CD4-positive, alpha-beta memory T cell (primary cell): ENCODE measurements at regions of chrX and their contacts with region 1.

Region 1: GRCh38 chrX:39749720-39750119 is 348.0 kb downstream of the BCOR start:
- DNase-seq: no peak
- H3K4me3 ChIP-seq: no peak overlapping the region
- H3K4me3 Mint-ChIP-seq: no peak overlapping the region
- H3K27ac ChIP-seq: no peak overlapping the region
- H3K27ac Mint-ChIP-seq: no peak overlapping the region
- H3K4me1 ChIP-seq: no peaks in the 10 kb centered on the region
- H3K4me1 Mint-ChIP-seq: peaks cover 0 to 2% (median 0%) of the 10 kb centered on the region in 4 donors
- H3K27me3 ChIP-seq: no peaks in the 10 kb centered on the region
- H3K27me3 Mint-ChIP-seq: no peaks in the 10 kb centered on the region

Region 2: DNA sequence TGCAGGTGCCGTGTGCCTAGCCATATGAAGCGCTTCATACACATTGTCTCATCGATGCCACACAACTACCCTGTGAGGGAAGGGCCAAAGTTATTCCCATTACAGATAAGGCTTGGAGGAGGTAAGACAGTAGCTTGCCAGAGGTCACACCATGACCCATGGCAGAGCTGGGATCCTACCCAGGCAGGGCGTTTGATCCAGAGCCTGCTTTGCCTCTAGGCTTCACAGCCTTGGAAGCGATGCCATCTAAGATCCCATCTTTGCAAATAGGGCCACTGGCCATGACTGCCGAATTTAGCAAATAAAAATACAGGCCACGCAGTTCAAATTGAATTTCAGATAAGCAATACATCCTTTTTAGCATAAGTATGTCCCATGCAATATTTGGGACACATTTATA is 10.1 kb before region 1 on chrX:
- CTCF ChIA-PET with region 1: no interaction called
- POLR2A ChIA-PET with region 1: no interaction called
- intact Hi-C with region 1: no loop called
- DNase-seq: no peak
- H3K4me3 ChIP-seq: no peak overlapping the region
- H3K4me3 Mint-ChIP-seq: no peak overlapping the region
- H3K27ac ChIP-seq: no peak overlapping the region
- H3K27ac Mint-ChIP-seq: no peak overlapping the region
- H3K4me1 ChIP-seq: no peaks in the 10 kb centered on the region
- H3K4me1 Mint-ChIP-seq: no peaks in the 10 kb centered on the region
- H3K27me3 ChIP-seq: no peaks in the 10 kb centered on the region
- H3K27me3 Mint-ChIP-seq: no peaks in the 10 kb centered on the region

Region 3: GRCh38 chrX:39796856-39797255 is 47.1 kb after region 1 on chrX:
- CTCF ChIA-PET with region 1: no interaction called
- POLR2A ChIA-PET with region 1: no interaction called
- intact Hi-C with region 1: loop called (anchors 10 kb)
- DNase-seq: no peak
- H3K4me3 ChIP-seq: no peak overlapping the region
- H3K4me3 Mint-ChIP-seq: no peak overlapping the region
- H3K27ac ChIP-seq: no peak overlapping the region
- H3K27ac Mint-ChIP-seq: no peak overlapping the region
- H3K4me1 ChIP-seq: no peaks in the 10 kb centered on the region
- H3K4me1 Mint-ChIP-seq: no peaks in the 10 kb centered on the region
- H3K27me3 ChIP-seq: no peaks in the 10 kb centered on the region
- H3K27me3 Mint-ChIP-seq: no peaks in the 10 kb centered on the region

Region 4: DNA sequence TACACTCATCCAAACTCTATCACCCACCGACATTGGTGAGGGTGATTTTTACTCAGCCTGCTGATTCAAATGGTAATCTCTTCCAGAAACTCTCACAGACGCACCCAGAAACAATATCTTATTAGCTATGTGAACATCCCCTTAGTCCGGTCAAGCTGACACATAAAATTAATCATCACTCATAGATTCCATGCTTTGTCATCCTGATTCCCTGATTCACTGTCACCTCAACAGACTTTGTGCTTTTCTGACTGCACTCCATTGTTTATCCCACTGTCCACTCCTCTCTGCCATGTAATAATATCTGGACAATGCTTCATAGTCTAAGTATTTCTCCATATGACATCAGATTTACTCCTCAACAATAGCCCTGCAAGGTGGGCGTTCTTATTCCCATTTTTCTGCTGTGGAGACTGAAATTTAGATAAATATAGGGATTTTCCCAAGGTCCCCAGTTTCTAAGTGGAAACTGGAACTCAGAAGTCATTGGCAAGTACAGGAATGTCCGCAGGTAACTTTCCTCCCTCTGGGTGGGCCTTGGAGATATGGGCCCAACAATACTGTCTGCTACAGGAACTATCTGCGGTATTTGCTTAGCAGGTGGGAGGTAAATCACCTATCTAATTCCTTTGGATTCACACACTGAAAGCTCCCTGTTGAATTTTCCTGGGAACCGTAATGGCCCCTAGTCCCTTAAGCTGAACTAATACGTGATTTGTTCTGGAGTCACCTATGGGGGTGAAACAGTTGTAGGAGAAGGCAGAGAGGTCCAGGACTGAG is 576.7 kb after region 1 on chrX:
- CTCF ChIA-PET with region 1: no interaction called
- POLR2A ChIA-PET with region 1: no interaction called
- intact Hi-C with region 1: no loop called
- DNase-seq: no peak
- H3K4me3 ChIP-seq: no peak overlapping the region
- H3K4me3 Mint-ChIP-seq: no peak overlapping the region
- H3K27ac ChIP-seq: no peak overlapping the region
- H3K27ac Mint-ChIP-seq: no peak overlapping the region
- H3K4me1 ChIP-seq: no peaks in the 10 kb centered on the region
- H3K4me1 Mint-ChIP-seq: no peaks in the 10 kb centered on the region
- H3K27me3 ChIP-seq: no peaks in the 10 kb centered on the region
- H3K27me3 Mint-ChIP-seq: peaks cover 0 to 3% of the 10 kb centered on the region in 2 donors